ENCODE measurements at regions of chr10 and their contacts with region 1.

Region 1: GRCh38 chr10:3873728-3874461 is 88.9 kb upstream of the KLF6 start:
- DNase-seq: no peak
- H3K4me3 Mint-ChIP-seq: no peak overlapping the region
- H3K27ac Mint-ChIP-seq: peak overlapping the region; percentile 87
- H3K4me1 Mint-ChIP-seq: peaks cover 72% of the 10 kb centered on the region
- H3K27me3 Mint-ChIP-seq: no peaks in the 10 kb centered on the region

Region 2: GRCh38 chr10:3763852-3764625 is 109.9 kb before region 1 on chr10:
- CTCF ChIA-PET with region 1: no interaction called
- POLR2A ChIA-PET with region 1: no interaction called
- intact Hi-C with region 1: no loop called
- DNase-seq: peak; percentile 5
- H3K4me3 Mint-ChIP-seq: peak overlapping the region; percentile 22
- H3K27ac Mint-ChIP-seq: peak overlapping the region; percentile 70
- H3K4me1 Mint-ChIP-seq: peaks cover 91% of the 10 kb centered on the region
- H3K27me3 Mint-ChIP-seq: no peaks in the 10 kb centered on the region

Region 3: DNA sequence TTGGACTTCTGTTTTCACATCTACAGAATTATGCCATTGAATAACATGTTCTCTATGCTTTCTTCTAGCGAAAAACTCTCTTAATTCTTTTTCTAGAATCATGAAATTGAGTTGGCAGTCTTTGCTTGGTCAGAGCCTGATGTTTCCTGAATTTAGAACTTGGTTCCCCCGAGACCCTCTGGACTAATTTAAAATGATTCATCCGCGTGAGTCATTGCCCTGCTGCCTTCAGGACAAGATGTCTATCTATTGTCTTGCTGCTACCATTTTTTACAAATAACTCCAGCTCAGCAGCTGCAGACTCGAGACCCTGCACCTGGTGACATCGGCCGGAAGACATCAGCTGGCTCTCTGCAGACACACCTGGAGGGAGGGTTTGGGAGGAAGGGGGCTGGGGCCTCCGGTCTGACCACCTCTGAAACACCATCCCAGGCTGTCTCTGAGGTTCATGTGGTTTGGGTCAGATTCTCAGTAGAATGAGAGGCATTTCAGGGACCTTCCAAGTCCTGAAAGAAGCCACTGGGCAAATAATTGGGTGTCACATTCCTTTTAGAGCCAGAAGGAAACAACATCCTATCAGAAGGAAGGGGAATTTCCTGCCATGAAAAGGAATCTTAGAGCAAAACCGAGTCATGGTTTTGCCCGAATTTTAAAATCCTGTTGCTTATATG is 68.0 kb before region 1 on chr10:
- CTCF ChIA-PET with region 1: interaction called, 3 read pairs
- POLR2A ChIA-PET with region 1: interaction called, 31 read pairs
- intact Hi-C with region 1: loop called (anchors 1 kb)
- DNase-seq: peak; percentile 72
- H3K4me3 Mint-ChIP-seq: peak overlapping the region; percentile 68
- H3K27ac Mint-ChIP-seq: no peak overlapping the region
- H3K4me1 Mint-ChIP-seq: peaks cover 62% of the 10 kb centered on the region
- H3K27me3 Mint-ChIP-seq: no peaks in the 10 kb centered on the region

Region 4: DNA sequence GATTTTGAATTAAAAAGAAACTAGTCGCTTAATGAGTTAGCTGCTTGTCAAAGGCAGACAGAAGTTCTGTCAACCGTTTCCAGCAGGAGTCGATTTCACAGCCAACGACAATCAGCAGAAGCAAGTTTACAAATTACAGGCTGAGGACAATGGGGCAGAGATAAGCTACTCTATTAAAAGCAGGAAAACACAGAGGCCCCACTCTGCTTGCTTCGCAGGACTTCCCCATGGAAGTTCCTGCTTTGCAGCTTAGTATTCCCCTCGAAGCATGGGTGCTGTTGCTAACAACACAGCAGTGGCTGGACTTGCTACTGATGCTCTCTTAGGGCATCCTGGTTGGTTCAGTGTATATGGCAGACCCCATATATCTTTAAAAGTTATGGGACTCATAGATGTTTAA is 38.1 kb before region 1 on chr10:
- CTCF ChIA-PET with region 1: no interaction called
- POLR2A ChIA-PET with region 1: no interaction called
- intact Hi-C with region 1: loop called (anchors 1 kb)
- DNase-seq: no peak
- H3K4me3 Mint-ChIP-seq: peak overlapping the region; percentile 43
- H3K27ac Mint-ChIP-seq: peak overlapping the region; percentile 80
- H3K4me1 Mint-ChIP-seq: peaks cover 72% of the 10 kb centered on the region
- H3K27me3 Mint-ChIP-seq: no peaks in the 10 kb centered on the region

Region 5: DNA sequence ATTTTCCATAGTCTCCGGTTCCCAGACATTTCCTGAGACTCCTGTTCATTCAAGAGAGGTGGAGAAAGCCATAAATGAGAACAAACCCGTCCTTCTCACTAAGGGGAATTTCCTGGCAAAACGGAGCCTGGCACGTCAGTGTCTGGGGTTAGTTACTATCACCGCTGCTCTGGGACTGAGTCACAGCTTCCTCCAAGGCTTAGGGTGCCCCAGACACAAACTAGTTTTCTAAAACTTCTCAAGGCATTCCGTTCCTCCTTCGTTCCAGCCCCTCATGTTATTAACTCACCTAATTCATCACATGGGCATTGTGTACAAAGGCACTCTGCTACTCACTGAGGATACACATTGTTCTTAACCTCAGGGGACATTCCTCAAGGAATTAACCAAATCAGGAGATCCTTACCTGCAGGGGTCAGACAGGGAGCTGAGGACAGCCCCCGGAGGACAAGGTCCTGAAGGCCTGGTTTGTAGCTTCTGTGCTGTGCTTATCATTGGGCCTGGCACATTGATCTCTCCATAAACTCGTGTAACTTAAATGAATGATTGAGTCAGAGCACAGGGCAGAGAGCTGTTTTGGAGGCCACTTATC is 14.1 kb after region 1 on chr10:
- CTCF ChIA-PET with region 1: interaction called, 3 read pairs
- POLR2A ChIA-PET with region 1: interaction called, 20 read pairs
- intact Hi-C with region 1: loop called (anchors 1 kb)
- DNase-seq: peak; percentile 87
- H3K4me3 Mint-ChIP-seq: peak overlapping the region; percentile 58
- H3K27ac Mint-ChIP-seq: peak overlapping the region; percentile 96
- H3K4me1 Mint-ChIP-seq: peaks cover 68% of the 10 kb centered on the region
- H3K27me3 Mint-ChIP-seq: no peaks in the 10 kb centered on the region

Region 6: DNA sequence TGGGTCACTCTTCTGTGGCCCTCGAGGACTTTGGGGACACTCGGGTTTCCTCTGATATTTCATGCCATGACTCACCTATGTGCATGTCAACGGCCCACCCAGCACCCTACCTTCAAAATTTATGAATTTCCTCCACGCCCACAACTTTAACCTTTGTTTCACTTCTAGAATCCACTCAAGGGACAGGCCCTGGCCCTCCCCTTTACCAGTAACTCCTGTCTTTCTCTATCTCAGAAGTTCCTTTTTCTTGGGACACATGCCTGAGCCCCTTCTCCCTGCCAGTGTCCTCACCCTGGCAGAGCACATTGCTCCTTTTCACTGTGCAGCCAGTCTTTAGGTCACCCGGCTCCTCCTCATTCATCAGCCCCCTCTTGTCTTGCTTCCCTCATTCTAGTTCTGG is 193.6 kb after region 1 on chr10:
- CTCF ChIA-PET with region 1: no interaction called
- POLR2A ChIA-PET with region 1: no interaction called
- intact Hi-C with region 1: loop called (anchors 5 kb)
- DNase-seq: peak; percentile 57
- H3K4me3 Mint-ChIP-seq: no peak overlapping the region
- H3K27ac Mint-ChIP-seq: no peak overlapping the region
- H3K4me1 Mint-ChIP-seq: peaks cover 3% of the 10 kb centered on the region
- H3K27me3 Mint-ChIP-seq: no peaks in the 10 kb centered on the region

Region 7: DNA sequence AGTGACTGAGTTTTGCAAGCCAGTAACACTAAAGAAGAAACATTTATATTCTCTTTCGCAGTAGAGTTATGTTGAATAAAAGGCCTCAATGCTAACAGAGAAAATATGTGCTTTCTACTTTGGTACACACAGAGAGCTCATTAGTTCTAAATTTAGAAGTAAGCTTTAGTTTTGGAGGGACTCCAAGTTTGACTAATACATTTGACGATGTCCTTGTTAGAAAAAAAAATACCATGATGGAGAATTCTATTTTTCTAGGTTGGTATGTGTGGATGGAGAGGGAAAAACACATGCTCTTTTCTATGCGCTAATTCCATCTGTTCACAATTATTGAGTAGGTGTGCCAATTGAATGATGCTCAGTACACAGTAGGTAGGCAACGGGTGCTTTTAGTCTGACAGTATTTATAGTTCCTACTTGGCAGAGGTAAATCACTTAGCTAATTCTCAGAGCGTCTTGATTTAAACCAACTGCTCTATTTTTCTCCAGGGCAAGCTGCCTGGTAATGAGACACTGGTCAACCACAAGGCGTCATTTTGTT is 624.9 kb after region 1 on chr10:
- CTCF ChIA-PET with region 1: no interaction called
- POLR2A ChIA-PET with region 1: no interaction called
- intact Hi-C with region 1: no loop called
- DNase-seq: no peak
- H3K4me3 Mint-ChIP-seq: no peak overlapping the region
- H3K27ac Mint-ChIP-seq: no peak overlapping the region
- H3K4me1 Mint-ChIP-seq: no peaks in the 10 kb centered on the region
- H3K27me3 Mint-ChIP-seq: no peaks in the 10 kb centered on the region

Region 8: GRCh38 chr10:4775808-4776207 is 901.9 kb after region 1 on chr10:
- CTCF ChIA-PET with region 1: no interaction called
- POLR2A ChIA-PET with region 1: no interaction called
- intact Hi-C with region 1: loop called (anchors 5 kb)
- DNase-seq: no peak
- H3K4me3 Mint-ChIP-seq: no peak overlapping the region
- H3K27ac Mint-ChIP-seq: peak overlapping the region; percentile 80
- H3K4me1 Mint-ChIP-seq: peaks cover 14% of the 10 kb centered on the region
- H3K27me3 Mint-ChIP-seq: peaks cover 26% of the 10 kb centered on the region

Measured in activated CD4-positive, alpha-beta memory T cell treated with anti-CD3 and anti-CD28 coated beads for 36 hours (primary cell).